AG04449 (cell line): ENCODE measurements at regions of chr12 and their contacts with region 1.

Region 1: GRCh38 chr12:2057041-2057794 is 4.4 kb downstream of the CACNA1C start:
- DNase-seq: no peak
- H3K4me3 ChIP-seq: no peak overlapping the region; the same call in 1 of the 2 replicates
- CTCF ChIP-seq: peak; percentile 80

Region 2: GRCh38 chr12:1760566-1761382 is 296.4 kb before region 1 on chr12:
- CTCF ChIA-PET with region 1: no interaction called
- POLR2A ChIA-PET with region 1: no interaction called
- DNase-seq: no peak
- H3K4me3 ChIP-seq: no peak overlapping the region
- CTCF ChIP-seq: no peak

Region 3: DNA sequence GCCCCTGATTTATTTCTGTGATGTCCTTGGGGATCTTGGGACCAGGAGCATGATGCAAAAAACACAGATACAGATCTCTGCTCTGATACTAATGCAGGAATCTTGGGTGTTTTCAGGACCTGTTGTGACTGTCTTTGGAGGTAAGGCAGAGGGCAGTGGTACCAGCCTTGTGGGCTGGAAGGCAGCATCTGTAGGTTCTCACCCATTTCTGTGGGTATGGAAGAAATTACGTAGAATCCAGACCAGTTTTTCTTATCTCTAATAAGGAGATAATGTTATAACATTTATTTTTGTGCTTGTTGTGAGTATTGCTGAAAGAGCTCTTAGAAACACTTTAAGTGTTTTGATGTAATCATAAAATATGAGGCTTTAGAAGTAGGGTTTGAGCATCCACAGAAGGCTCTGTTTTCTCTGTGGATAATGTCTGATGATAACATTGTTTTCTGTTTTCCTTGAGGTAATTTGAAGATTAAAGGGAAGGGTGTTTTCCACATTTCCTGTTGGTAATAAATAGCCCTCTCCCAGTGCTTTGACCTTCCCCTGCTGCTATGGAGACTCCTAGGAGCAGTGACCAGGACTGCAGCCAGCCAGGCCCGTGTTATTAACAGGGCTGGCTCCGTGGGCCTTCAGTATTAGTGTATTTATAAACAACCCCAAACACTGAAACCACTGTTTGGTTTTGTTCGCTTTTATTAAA is 43.5 kb before region 1 on chr12:
- CTCF ChIA-PET with region 1: no interaction called
- POLR2A ChIA-PET with region 1: no interaction called
- DNase-seq: no peak
- H3K4me3 ChIP-seq: no peak overlapping the region
- CTCF ChIP-seq: no peak

Region 4: GRCh38 chr12:2068653-2069052 is 11.4 kb after region 1 on chr12:
- CTCF ChIA-PET with region 1: interaction called, 43 read pairs
- POLR2A ChIA-PET with region 1: no interaction called
- DNase-seq: no peak
- H3K4me3 ChIP-seq: no peak overlapping the region
- CTCF ChIP-seq: no peak

Region 5: DNA sequence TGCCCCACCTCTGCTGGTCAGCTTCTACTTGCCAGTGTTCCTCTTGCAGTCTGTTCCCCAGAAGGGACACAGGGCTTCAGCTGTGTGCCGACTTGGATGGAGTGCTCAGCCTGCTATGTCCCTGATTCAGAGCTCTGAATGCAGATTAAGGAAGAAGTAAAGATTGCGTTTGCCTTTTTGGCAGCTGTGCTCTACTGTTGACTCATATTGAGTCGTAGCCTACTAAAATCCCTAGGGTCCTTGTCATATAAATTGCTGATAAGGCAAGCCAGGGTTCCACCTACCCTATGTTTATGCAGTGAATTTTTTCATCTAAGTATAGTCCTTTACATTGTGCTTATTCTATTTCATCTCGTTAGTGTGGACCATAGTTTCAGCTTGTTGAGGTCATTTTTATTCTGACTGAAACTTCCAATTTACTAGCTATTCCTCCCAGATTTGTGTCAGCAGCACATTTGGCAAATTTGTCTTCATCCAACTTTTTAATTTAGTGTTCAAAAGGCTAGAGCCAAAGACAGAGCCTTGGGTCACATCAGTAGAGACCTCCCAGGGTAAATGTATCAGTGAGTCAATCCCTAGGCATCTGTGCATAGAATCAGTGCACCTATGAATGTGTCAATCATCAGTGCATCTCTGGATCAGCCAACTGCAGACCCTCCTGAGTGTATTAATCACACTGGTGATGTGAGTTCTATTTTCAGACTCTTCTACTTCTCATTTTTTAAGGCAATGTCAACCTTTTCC is 27.5 kb after region 1 on chr12:
- CTCF ChIA-PET with region 1: interaction called, 13 read pairs
- POLR2A ChIA-PET with region 1: no interaction called
- DNase-seq: peak; percentile 63
- H3K4me3 ChIP-seq: no peak overlapping the region
- CTCF ChIP-seq: no peak

Region 6: DNA sequence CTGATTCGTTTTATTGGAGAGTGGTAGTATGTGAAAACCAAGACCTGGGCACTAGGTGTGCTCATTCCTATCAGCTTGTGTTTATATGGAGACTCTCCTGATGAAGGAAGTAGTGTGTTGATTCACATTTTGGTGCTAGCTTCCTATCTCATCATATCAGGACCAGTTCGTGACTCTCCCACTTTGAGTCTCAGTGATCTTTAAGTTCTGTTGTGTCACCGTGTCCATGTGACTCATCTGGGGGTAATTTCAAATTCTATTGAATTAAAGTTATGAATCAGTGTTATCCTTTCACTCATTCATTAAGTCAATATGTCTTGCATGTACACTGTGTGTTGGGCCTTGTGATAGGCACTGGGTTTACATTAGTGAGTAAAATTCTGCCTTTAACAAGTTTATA is 175.8 kb after region 1 on chr12:
- CTCF ChIA-PET with region 1: no interaction called
- POLR2A ChIA-PET with region 1: no interaction called
- DNase-seq: no peak
- H3K4me3 ChIP-seq: no peak overlapping the region
- CTCF ChIP-seq: no peak

Region 7: DNA sequence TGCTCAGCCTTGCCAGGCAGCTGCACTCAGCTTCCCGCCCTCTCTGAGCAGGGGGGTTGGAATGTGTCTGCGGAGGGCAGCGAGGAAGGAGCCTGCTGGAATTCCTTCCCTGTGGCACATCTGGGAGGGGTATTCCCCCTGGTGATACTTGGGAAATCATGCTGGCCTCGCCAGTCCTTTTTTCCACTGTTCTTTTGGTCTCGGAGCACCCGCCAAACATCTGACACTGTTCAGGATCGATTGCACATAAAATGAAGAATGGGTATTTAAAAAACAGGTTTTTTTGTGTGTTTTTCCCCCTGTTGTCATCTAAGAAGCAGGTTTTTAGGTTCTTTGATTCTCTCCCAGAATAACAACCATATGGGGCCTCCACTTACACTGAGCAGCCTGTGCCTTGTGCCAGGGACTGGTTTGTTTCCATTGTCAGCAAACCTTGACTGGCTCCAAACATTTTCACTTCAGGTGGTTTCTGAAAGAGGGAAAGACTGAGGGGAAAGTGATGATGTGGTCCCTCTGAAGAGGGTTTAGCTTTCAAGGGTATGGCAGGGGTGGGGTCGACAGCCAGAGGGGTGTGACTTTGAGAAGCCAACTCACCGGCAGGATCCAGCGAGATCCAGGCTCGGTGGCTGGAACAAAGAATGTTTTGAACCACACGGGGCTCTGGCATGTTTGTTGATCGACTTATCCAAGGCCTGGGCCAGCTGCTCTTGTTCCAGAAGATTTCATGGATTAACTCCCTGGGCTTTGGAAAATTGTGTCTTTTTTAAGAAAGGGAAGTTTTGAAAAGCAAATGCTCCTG is 210.7 kb after region 1 on chr12:
- CTCF ChIA-PET with region 1: interaction called, 14 read pairs
- POLR2A ChIA-PET with region 1: no interaction called
- DNase-seq: no peak
- H3K4me3 ChIP-seq: no peak overlapping the region
- CTCF ChIP-seq: no peak

Region 8: GRCh38 chr12:2284857-2285256 is 227.6 kb after region 1 on chr12:
- CTCF ChIA-PET with region 1: interaction called, 48 read pairs
- POLR2A ChIA-PET with region 1: interaction called, 3 read pairs
- DNase-seq: no peak
- H3K4me3 ChIP-seq: peak overlapping the region; percentile 24
- CTCF ChIP-seq: peak; percentile 87

Region 9: DNA sequence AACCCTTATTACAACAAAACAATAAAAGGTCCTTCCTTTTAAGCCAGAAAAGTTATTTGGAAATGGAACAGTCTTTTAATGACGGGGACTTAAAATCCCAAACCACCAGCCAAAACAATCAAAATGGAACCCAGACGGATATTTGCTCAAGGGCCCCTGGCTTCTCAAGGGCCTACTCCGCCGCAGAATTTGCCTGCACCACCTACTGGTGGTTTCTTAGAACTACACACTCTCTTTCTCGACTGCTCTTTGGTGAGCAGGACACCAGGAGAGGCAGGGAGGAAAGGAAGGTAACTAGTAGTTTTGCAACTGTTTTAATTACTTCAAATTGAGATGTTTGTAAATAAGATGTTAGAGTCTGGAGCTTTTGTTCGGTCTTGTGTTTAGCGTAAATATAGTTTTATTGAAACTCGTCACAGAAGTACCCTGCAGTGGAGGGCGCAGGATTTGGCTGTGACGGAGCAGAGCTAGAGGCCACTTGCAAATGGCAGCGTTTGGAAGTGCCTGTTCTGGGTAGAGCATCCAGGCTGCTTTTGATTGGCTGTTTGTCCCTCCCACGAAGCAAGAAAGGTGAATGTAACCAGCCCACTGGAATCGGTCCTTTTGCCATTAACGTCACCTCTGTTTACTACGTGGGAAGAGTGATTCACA is 234.1 kb after region 1 on chr12:
- CTCF ChIA-PET with region 1: interaction called, 48 read pairs
- POLR2A ChIA-PET with region 1: no interaction called
- DNase-seq: no peak
- H3K4me3 ChIP-seq: no peak overlapping the region
- CTCF ChIP-seq: peak; percentile 53

Region 10: GRCh38 chr12:2583091-2583497 is 525.9 kb after region 1 on chr12:
- CTCF ChIA-PET with region 1: interaction called, 13 read pairs
- POLR2A ChIA-PET with region 1: no interaction called
- DNase-seq: no peak
- H3K4me3 ChIP-seq: peak overlapping the region; percentile 32
- CTCF ChIP-seq: peak; percentile 87